ENCODE measurements at regions of chr17 and their contacts with region 1.

Region 1: GRCh38 chr17:57604771-57605674 is 140.1 kb downstream of the CCDC182 start:
- DNase-seq: peak; percentile 54
- H3K4me3 ChIP-seq: peak overlapping the region; percentile 40
- H3K27ac ChIP-seq: peak overlapping the region; percentile 88
- H3K4me1 ChIP-seq: peaks cover 46% of the 10 kb centered on the region
- H3K27me3 ChIP-seq: no peaks in the 10 kb centered on the region
- CTCF ChIP-seq: no peak

Region 2: DNA sequence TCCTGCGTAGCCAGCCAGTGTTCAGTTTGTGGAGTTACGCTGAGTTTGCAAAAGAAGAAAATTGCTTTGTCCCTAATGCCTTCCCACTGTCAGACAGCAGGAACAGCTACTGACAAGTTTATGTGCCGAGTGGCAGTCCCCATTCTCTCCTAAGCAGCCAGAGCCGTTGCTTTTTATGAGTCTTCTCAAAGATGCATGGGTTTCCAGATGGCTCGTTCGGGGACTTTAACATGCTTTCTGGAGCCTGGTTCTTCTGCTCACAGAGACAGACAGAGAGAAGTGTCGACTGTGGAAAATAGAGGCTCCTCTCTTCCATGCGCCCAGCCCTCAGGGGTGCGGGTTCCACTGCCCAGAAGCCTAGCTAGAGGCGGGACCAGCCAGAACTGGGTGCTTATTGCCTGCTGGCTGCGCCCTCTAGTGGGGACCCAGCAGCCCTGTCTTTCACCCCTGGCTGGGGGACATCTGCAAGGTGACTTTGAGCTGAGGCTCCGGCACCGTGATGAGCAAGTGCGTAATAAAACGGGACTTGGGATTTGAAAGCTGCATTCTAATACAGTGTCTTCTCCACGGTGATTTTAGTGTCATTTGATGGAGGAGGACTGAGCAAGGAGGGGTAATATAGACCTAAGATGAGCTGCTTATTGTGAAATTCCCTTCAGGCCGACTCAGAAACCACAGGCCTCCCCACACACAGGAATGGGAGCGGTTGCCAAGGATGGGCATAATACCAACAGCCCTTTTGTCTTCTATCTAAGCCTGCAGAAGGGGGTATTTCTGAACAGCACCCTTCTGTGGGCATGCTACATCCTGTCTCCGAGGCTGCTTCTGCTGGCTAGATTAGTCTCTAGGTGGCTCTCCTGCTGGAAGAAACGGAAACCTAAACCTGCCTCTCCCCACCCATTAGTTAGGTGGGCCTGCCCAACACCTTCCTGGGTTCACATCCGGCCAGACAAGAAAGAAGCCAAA is 66.9 kb after region 1 on chr17:
- intact Hi-C with region 1: loop called (anchors 5 kb)
- DNase-seq: peak; percentile 73
- H3K4me3 ChIP-seq: no peak overlapping the region
- H3K27ac ChIP-seq: peak overlapping the region; percentile 18
- H3K4me1 ChIP-seq: peaks cover 17% of the 10 kb centered on the region
- H3K27me3 ChIP-seq: no peaks in the 10 kb centered on the region
- CTCF ChIP-seq: peak; percentile 96